ENCODE measurements at regions of chr18 and their contacts with region 1.

Region 1: GRCh38 chr18:59837586-59837985 is 62.2 kb upstream of the PMAIP1 start:
- DNase-seq: peak; percentile 50

Region 2: GRCh38 chr18:59908790-59909189 is 71.2 kb after region 1 on chr18:
- CTCF ChIA-PET with region 1: interaction called, 3 read pairs
- POLR2A ChIA-PET with region 1: interaction called, 12 read pairs
- DNase-seq: no peak

Measured in HEK293T (cell line).